ENCODE measurements at regions of chr2 and their contacts with region 1.

Region 1: DNA sequence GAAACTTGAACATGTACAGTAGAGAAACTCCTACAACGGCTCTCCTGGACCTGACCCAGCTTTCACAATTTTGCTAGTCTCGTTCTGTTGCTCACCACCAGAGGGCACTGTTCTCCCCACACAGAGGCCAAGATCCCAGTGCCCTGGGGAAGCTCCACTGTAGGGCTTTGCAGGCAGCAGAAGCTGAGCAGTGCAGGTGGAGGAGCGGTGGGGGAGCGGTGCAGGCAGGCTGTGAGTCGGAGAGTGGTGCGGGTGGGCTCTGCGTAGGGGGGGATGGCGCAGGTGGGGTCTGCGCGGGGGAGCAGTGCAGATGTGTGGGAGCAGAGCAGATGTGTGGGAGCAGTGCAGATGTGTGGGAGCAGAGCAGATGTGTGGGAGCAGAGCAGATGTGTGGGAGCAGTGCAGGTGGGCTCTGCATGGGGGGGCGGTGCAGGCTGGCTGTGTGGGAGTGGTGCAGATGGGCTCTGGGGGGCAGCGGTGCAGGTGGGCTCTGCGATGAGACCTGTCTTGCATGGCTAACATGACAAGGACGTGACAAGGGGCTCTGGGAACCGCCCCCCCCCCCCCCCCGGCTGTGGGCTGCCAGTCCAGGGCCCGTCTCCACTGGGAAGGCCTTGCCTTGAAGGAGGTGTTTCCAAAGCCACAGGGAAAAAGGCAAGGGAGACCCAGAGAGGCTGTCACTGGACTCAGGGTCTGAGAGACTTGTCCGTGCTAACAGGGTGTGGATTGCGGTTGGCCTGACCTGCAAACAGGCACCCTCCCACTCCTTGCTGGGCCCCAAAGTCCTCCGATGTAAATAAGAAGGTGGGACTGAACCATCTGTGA is 7.3 kb downstream of the CYS1 start:
- DNase-seq: peak; percentile 89
- H3K4me3 Mint-ChIP-seq: no peak overlapping the region
- H3K27ac Mint-ChIP-seq: no peak overlapping the region
- H3K4me1 Mint-ChIP-seq: peaks cover 6% of the 10 kb centered on the region
- H3K27me3 Mint-ChIP-seq: peaks cover 49% of the 10 kb centered on the region

Region 2: GRCh38 chr2:10028988-10029874 is 43.6 kb before region 1 on chr2:
- CTCF ChIA-PET with region 1: no interaction called
- POLR2A ChIA-PET with region 1: no interaction called
- DNase-seq: peak; percentile 31
- H3K4me3 Mint-ChIP-seq: peak overlapping the region; percentile 6
- H3K27ac Mint-ChIP-seq: peak overlapping the region; percentile 83
- H3K4me1 Mint-ChIP-seq: peaks cover 24% of the 10 kb centered on the region
- H3K27me3 Mint-ChIP-seq: no peaks in the 10 kb centered on the region

Region 3: DNA sequence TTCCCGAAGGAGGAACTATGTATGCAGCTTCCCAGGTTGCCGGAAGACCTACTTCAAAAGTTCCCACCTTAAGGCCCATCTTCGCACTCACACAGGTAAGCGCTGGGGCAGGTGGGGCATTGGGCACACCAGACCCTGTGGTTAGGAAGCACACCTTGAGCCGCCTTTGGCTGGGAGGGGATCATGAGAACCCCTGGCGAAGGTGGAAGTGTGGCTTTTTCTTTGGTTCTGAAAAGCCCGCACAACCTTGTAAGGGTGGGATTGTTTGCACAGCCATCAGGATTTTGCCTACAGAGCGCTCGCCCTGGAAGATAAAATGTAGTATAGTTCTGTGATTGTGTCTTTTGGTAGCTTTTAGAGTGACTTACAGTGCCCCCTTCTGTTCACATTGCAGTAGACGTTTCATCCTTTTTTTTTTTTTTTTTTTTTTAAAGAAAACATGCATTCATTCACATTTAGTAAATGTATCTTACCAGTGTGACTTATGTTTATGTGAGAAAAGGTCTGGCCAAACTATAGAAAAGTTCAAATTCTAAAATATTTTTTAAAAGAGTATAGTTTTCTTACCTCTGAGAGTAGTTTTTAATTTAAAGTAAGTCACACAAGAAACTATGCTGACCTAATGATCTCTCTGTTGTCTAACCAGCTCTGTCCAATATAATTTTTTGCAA is 24.2 kb before region 1 on chr2:
- CTCF ChIA-PET with region 1: interaction called, 13 read pairs
- POLR2A ChIA-PET with region 1: no interaction called
- DNase-seq: peak; percentile 54
- H3K4me3 Mint-ChIP-seq: no peak overlapping the region
- H3K27ac Mint-ChIP-seq: no peak overlapping the region
- H3K4me1 Mint-ChIP-seq: peaks cover 19% of the 10 kb centered on the region
- H3K27me3 Mint-ChIP-seq: no peaks in the 10 kb centered on the region

Region 4: GRCh38 chr2:10057231-10058107 is 15.4 kb before region 1 on chr2:
- CTCF ChIA-PET with region 1: interaction called, 12 read pairs
- POLR2A ChIA-PET with region 1: no interaction called
- DNase-seq: no peak
- H3K4me3 Mint-ChIP-seq: no peak overlapping the region
- H3K27ac Mint-ChIP-seq: no peak overlapping the region
- H3K4me1 Mint-ChIP-seq: peaks cover 5% of the 10 kb centered on the region
- H3K27me3 Mint-ChIP-seq: no peaks in the 10 kb centered on the region

Region 5: DNA sequence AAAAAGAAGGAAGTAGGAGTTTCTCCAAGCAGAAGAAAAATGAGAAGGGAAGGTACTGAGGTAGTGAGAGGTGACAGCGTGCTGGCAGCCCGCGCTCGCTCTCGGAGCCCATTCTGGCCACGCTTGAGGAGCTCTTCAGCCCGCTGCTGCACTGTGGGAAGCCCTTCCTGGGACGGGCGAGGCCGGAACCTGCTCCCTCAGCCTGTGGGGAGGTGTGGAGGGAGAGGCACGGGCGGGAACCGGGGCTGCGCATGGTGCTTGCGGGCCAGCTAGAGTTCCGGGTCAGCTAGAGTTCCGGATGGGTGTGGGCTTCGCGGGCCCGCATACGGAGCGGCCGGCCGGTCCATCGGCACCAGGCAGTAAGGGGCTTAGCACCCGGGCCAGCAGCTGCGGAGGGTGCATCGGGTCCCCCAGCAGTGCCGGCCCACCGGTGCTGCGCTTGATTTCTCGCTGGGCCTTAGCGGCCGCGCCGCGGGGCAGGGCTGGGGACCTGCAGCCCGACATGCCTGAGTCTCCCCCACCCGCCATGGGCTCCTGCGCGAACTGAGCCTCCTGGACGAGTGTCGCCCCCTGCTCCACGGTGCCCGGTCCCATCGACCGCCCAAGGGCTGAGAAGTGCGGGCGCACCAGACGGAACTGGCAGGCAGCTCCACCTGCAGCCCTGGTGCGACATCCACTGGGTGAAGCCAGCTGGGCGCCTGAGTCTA is 18.5 kb after region 1 on chr2:
- CTCF ChIA-PET with region 1: interaction called, 28 read pairs
- POLR2A ChIA-PET with region 1: no interaction called
- DNase-seq: peak; percentile 31
- H3K4me3 Mint-ChIP-seq: peak overlapping the region; percentile 57
- H3K27ac Mint-ChIP-seq: peak overlapping the region; percentile 63
- H3K4me1 Mint-ChIP-seq: peaks cover 13% of the 10 kb centered on the region
- H3K27me3 Mint-ChIP-seq: peaks cover 70% of the 10 kb centered on the region

Region 6: GRCh38 chr2:10097352-10098148 is 24.7 kb after region 1 on chr2:
- CTCF ChIA-PET with region 1: interaction called, 28 read pairs
- POLR2A ChIA-PET with region 1: interaction called, 4 read pairs
- DNase-seq: peak; percentile 37
- H3K4me3 Mint-ChIP-seq: no peak overlapping the region
- H3K27ac Mint-ChIP-seq: no peak overlapping the region
- H3K4me1 Mint-ChIP-seq: peaks cover 7% of the 10 kb centered on the region
- H3K27me3 Mint-ChIP-seq: peaks cover 44% of the 10 kb centered on the region

Region 7: GRCh38 chr2:10120158-10120886 is 47.5 kb after region 1 on chr2:
- CTCF ChIA-PET with region 1: interaction called, 10 read pairs
- POLR2A ChIA-PET with region 1: no interaction called
- DNase-seq: peak; percentile 96
- H3K4me3 Mint-ChIP-seq: peak overlapping the region; percentile 98
- H3K27ac Mint-ChIP-seq: peak overlapping the region; percentile 99
- H3K4me1 Mint-ChIP-seq: peaks cover 57% of the 10 kb centered on the region
- H3K27me3 Mint-ChIP-seq: no peaks in the 10 kb centered on the region

Region 8: DNA sequence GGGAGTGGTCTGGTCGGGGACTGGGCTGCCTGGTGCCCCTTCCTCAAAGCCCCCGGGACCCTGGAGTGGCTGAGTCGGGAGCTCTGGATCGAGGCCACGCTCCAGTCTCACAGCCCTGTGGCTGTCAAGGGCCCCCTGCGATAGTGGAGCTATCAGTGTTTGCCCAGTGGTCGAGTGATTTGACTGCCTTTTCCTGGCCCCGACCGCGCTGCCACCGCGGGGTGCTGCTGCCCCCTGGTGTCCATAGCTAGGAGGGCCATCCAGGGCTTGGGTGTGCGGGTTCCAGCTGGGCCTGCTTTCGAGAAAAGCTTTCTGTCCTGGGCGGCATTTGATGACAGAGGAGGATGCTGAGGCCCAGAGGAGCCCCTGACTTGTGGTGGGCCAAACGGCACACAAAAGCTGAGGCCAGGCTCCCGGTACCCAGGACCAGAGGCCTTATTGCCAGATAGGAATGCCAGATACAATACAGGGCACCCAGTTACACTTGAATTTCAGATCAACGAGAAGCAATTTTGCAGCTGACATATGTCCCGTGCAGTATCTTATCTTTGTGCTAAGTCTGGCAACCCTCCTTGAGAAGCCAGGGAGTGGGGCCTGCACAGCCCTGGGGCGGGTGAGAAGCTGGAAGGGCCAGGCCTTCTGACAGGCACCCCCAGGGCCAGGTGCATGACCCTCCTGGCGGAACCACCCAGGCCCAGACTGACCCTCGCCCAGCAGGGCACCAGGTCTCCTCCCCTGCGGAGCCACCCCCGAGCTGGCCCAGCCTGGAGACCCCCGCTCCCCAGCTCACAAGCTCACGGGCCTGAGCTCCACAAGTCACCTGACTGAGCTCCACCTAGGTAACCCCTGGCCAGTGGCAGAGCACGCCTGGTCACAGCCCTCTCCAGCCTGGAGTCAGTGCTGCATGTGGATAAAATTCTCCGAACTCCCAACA is 362.3 kb after region 1 on chr2:
- CTCF ChIA-PET with region 1: interaction called, 39 read pairs
- POLR2A ChIA-PET with region 1: interaction called, 3 read pairs
- DNase-seq: peak; percentile 68
- H3K4me3 Mint-ChIP-seq: no peak overlapping the region
- H3K27ac Mint-ChIP-seq: no peak overlapping the region
- H3K4me1 Mint-ChIP-seq: peaks cover 14% of the 10 kb centered on the region
- H3K27me3 Mint-ChIP-seq: peaks cover 4% of the 10 kb centered on the region